MCF 10A (cell line): ENCODE measurements at regions of chr2 and their contacts with region 1.

Region 1: DNA sequence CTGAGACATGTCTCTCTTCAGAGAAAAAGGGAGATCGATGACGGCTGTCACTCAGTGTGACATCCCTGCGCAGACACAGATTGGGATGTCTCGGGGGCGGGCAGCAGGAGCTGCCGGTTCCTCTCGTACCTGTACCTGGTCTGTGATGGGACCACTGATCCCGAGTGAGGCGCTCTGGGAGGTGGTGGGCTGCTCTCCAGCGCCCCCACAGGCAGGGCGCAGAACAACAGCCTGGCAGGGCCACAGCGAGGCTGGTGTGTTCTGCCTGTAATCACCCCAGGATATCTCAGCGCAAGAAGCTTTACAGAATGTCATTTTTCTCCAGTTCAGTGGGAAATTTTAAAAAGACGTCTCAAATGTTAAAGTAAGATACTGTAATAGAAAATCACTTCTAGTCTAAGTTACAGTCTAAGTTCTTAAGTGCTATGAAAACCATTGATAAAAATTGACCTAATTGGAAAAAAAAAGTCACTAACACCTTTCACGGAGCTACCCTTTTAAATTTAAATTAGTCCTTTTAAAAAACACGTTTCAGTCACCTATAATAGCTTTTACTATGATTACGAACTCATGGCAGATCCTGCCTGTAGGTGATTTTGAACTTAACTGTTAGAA is 189.8 kb downstream of the SNTG2 start:
- DNase-seq: peak; percentile 26
- H3K4me3 Mint-ChIP-seq: no peak overlapping the region
- H3K27ac Mint-ChIP-seq: no peak overlapping the region
- H3K4me1 Mint-ChIP-seq: no peaks in the 10 kb centered on the region
- H3K27me3 Mint-ChIP-seq: no peaks in the 10 kb centered on the region
- CTCF ChIP-seq: peak; percentile 94

Region 2: DNA sequence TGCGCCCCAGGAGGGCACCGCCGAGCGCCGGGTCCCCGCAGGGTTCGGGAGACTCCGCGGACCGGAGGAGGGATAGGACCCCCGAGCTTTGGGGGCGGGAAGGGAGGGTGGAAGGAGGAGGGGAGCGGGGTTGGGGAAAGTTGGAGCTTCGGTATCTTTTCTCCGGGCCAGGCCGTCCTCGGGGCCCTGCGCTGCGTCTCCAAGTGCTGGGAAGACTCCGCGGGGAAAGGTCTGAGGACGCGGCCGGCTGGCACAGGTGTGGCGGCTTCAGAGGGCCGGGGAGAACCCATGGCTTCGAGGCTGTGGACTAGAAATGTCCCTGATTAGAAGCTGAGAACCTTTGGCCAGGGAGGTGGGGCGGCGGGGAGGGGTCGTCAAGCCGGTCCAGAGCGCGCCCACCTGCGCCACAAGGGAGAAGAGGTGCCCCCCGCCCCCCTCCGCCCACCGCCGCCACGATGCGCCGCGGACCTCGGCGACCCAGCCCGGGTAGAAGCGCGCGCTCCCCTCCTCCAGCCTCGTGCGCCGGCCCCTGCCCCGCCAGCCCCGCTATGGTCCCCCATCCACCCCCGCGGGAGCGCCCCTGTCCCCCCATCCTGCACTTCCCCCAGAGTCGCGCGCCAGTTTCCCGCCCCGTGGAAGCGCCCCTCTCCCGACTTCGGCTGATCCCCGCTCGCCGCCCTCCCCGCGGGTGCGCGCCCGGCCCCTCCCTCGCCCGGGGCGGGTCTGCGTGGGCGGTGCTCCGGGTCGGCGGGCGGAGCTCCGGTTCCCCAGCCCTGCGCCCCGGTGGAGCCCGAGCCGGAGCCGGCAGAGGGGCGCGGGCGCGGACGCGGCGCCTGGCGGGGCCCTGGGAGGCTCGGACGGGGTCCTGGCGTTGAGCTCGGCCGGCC is 190.2 kb before region 1 on chr2 and contains the start of gene SNTG2:
- CTCF ChIA-PET with region 1: interaction called, 15 read pairs
- POLR2A ChIA-PET with region 1: no interaction called
- intact Hi-C with region 1: loop called (anchors 1 kb)
- DNase-seq: no peak
- H3K4me3 Mint-ChIP-seq: peak within 1 kb of the TSS; percentile 19
- H3K27ac Mint-ChIP-seq: no peak within 1 kb of the TSS
- H3K4me1 Mint-ChIP-seq: no peaks in the 10 kb centered on the region
- H3K27me3 Mint-ChIP-seq: peaks cover 11% of the 10 kb centered on the region
- CTCF ChIP-seq: no peak
- total RNA-seq, gene SNTG2: not detected in 2 replicates

Region 3: DNA sequence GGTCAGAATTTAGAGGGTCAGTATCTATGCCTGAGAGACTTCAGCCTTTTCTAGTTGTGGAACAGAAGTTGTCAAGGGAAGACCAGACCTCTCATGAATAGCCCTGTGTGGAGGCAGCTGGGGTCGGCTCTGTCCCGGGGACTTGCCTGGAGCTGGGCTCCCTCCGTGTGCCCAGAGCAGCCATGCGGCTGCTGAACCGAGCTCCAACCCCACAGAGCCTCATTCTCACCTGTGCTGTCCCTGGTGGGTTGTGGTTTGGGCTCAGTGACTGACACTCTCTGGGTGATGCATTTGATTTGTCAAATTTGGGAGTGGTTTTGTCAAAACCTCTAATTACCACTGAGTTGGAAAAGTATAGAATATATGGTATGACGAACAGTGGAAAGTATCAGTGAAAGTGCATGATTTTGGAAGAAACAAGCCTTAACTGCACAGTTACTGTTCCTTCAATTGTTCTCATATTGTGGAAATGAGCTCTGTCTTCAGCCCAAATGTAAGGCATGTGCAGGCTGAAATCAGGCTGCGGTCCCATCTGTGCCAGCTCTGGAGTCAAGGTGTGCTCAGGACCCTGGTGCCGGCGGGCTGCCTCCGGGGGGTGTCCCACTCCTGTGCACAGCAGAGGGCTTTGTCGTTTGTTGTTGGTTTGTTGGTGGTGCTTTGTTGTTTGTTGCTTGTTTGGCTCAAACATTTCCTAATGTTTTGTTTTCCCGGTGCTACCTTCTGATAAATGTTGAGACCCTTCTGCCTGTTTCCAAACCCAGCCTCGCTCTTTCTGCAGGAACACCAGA is 10.4 kb after region 1 on chr2:
- CTCF ChIA-PET with region 1: interaction called, 13 read pairs
- POLR2A ChIA-PET with region 1: no interaction called
- intact Hi-C with region 1: no loop called
- DNase-seq: no peak
- H3K4me3 Mint-ChIP-seq: no peak overlapping the region
- H3K27ac Mint-ChIP-seq: no peak overlapping the region
- H3K4me1 Mint-ChIP-seq: peaks cover 6% of the 10 kb centered on the region
- H3K27me3 Mint-ChIP-seq: no peaks in the 10 kb centered on the region
- CTCF ChIP-seq: no peak

Region 4: DNA sequence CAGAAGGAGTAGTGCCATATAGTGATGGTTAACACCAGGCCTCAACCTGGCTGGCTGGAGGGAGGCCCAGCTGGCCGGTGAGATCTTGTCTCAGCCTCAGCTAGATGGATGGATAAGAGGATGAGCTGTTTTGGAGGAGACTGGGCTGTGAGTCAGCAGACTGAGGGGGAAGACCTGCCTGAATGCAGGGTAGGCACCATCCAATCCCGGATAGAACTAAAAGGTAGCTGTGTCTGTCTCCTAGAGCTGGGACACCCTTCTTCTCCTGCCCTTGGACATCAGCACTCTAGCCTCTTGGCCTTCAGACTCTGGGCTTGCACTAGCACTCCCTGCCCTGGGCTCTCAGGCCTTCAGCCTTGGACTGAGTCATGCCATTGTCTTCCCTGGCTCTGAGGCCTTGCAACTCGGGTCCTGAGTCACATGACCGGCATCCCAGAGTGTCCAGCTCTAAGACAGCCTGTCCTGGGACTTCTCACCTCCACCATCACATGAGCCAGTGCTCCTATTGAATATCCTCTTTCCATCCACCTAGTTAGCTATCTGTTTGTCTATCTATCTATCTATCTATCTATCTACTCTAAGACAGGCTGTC is 404.1 kb after region 1 on chr2:
- CTCF ChIA-PET with region 1: interaction called, 3 read pairs
- POLR2A ChIA-PET with region 1: no interaction called
- intact Hi-C with region 1: loop called (anchors 2 kb)
- DNase-seq: peak; percentile 42
- H3K4me3 Mint-ChIP-seq: no peak overlapping the region
- H3K27ac Mint-ChIP-seq: no peak overlapping the region
- H3K4me1 Mint-ChIP-seq: peaks cover 7% of the 10 kb centered on the region
- H3K27me3 Mint-ChIP-seq: no peaks in the 10 kb centered on the region
- CTCF ChIP-seq: no peak